ENCODE measurements at regions of chr13 and their contacts with region 1.

Region 1: GRCh38 chr13:77740931-77741596 is 43.6 kb downstream of the SLAIN1 start:
- DNase-seq: no peak
- ATAC-seq: no peak
- H3K4me3 ChIP-seq: no peak overlapping the region
- H3K27ac ChIP-seq: no peak overlapping the region
- H3K4me1 ChIP-seq: peaks cover 17% of the 10 kb centered on the region
- H3K27me3 ChIP-seq: no peaks in the 10 kb centered on the region
- CTCF ChIP-seq: no peak
- POLR2A ChIP-seq: no peak

Region 2: GRCh38 chr13:77599351-77599750 is 141.7 kb before region 1 on chr13:
- intact Hi-C with region 1: loop called (anchors 10 kb)
- DNase-seq: no peak
- ATAC-seq: no peak
- H3K4me3 ChIP-seq: no peak overlapping the region
- H3K27ac ChIP-seq: no peak overlapping the region
- H3K4me1 ChIP-seq: no peaks in the 10 kb centered on the region
- H3K27me3 ChIP-seq: no peaks in the 10 kb centered on the region
- CTCF ChIP-seq: no peak
- POLR2A ChIP-seq: no peak

Region 3: DNA sequence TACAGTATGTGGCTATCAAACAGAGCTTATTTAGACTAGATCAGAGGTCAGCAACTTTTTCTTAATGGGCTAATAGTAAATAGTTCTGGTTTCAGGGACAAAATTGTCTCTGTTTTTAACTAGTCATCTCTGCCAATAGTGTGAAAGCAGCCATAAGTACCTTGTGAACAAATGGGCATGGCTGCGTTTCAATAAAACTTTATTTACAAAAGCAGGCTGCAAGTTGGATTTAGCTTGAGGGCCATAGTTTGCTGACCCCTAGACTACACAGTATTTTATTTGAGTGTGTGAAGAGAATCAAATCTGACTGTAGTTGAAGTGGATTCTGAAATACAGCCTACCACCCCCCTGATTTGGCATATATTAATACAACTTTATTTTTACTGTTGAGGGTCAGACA is 130.0 kb before region 1 on chr13:
- intact Hi-C with region 1: no loop called
- DNase-seq: no peak
- ATAC-seq: no peak
- H3K4me3 ChIP-seq: no peak overlapping the region
- H3K27ac ChIP-seq: no peak overlapping the region
- H3K4me1 ChIP-seq: no peaks in the 10 kb centered on the region
- H3K27me3 ChIP-seq: no peaks in the 10 kb centered on the region
- CTCF ChIP-seq: no peak
- POLR2A ChIP-seq: no peak

Measured in body of pancreas (tissue), 4 donors.